ENCODE measurements at regions of chr11 and their contacts with region 1.

Region 1: GRCh38 chr11:75133976-75134375 is 16.9 kb upstream of the SLCO2B1 start:
- ATAC-seq: no peak
- H3K4me3 ChIP-seq: no peak overlapping the region
- H3K27ac ChIP-seq: no peak overlapping the region
- H3K4me1 ChIP-seq: no peaks in the 10 kb centered on the region

Region 2: GRCh38 chr11:75022759-75023396 is 111.1 kb before region 1 on chr11:
- in situ Hi-C with region 1: loop called in 1 of 9 experiments (anchors 10 kb)
- ATAC-seq: peak; percentile 81 to 99 (median 85)
- H3K4me3 ChIP-seq: no peak overlapping the region
- H3K27ac ChIP-seq: no peak overlapping the region
- H3K4me1 ChIP-seq: peaks cover 10 to 13% of the 10 kb centered on the region in 2 donors

Region 3: DNA sequence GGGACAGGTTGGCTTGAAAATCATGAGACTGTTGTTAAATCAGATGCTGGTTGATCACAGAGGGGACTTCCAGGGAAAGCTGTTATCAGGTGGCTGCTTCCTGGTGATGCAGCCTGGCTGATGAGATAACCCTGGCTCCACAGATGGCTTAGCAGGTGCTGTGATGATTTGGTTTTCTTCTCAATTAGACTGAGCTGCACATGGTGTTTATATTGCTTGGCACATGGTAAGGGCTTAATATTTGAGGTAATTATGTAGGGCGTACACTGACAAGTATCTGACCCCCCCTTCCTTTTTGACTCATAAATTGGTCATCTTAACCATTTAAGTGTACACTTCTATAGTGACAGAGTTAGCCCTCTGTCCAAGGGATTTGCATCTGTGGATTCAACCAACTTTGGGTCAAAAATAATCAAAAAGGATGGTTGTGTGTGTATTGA is 272.4 kb after region 1 on chr11:
- in situ Hi-C with region 1: no loop called
- ATAC-seq: peak in 1 of 8 experiments; percentile 37
- H3K4me3 ChIP-seq: no peak overlapping the region
- H3K27ac ChIP-seq: no peak overlapping the region
- H3K4me1 ChIP-seq: peaks cover 12% of the 10 kb centered on the region in 2 donors

Measured in motor neuron (in vitro differentiated cells).